PC-9 (cell line): ENCODE measurements at regions of chr2 and their contacts with region 1.

Region 1: DNA sequence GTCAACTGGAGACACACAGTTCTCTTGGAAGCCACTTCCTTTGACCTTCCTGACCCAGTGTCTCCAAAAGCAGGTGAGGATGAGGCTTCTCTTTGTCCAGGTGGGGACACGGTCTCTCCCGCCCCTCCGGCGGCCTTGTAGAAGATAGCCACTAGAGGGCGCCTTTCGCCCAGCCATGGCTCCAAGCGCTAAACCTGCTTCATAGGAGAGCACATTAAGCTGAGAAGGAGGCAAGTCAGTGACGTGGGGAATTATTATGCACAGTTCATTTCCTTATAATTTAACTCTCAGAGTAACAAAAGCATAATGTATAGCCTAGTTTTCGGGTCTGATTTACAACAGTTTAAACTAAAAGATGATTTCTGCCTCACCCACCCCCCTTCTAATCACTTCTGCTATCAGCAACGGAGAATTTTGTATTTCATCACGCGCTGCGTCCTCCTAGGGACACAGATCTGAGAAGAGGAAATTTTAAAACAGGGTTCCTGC is 208.7 kb downstream of the ICOS start:
- DNase-seq: peak; percentile 40 to 62
- H3K4me3 ChIP-seq: no peak overlapping the region
- H3K27ac ChIP-seq: no peak overlapping the region
- H3K4me1 ChIP-seq: no peaks in the 10 kb centered on the region
- H3K27me3 ChIP-seq: peaks cover 35% of the 10 kb centered on the region
- CTCF ChIP-seq: peak; percentile 84

Region 2: DNA sequence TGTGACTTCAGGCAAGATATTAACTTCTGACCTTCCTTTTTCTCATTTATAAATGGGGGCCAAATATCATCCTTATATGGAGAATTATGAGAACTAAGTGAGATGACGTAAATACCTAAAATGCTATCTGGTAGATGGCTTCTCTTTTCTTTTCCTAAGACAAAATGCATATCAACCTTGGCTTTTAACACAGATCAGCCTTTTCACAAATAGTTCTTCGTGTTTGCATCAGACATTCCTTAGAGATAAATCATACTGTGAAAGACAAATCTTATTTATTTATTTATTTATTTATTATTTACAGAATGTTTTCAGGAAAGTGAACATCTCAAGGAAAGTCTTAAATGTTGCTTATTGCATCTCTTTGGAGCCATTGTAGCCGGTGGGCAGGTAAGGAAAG is 1067.9 kb before region 1 on chr2:
- CTCF ChIA-PET with region 1: no interaction called
- POLR2A ChIA-PET with region 1: no interaction called
- intact Hi-C with region 1: no loop called
- DNase-seq: no peak
- H3K4me3 ChIP-seq: no peak overlapping the region
- H3K27ac ChIP-seq: peak overlapping the region; percentile 74
- H3K4me1 ChIP-seq: peaks cover 11% of the 10 kb centered on the region
- H3K27me3 ChIP-seq: no peaks in the 10 kb centered on the region
- CTCF ChIP-seq: no peak

Region 3: DNA sequence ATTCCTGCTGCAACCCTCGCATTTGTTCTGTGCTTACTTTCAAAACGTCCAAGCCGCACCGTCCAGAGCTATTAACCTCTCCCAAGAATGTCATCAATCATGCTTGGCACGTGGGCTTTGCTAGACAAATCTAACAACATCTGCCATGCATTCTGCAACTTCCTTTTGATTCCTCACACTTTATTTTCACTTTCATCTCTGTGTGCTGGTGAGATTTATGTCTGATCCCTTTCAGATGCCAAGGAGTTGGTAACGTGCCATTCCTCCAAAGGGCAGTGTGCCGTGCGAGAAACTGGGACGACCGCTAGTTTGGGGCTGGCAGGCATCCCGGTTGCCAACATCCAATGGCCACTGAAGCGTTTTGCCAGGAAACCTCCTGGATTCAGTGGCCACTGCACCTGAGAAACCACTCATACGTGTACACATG is 169.9 kb after region 1 on chr2:
- CTCF ChIA-PET with region 1: no interaction called
- POLR2A ChIA-PET with region 1: no interaction called
- intact Hi-C with region 1: loop called (anchors 10 kb)
- DNase-seq: no peak
- H3K4me3 ChIP-seq: no peak overlapping the region
- H3K27ac ChIP-seq: no peak overlapping the region
- H3K4me1 ChIP-seq: no peaks in the 10 kb centered on the region
- H3K27me3 ChIP-seq: no peaks in the 10 kb centered on the region
- CTCF ChIP-seq: no peak

Region 4: GRCh38 chr2:205925373-205926337 is 1780.3 kb after region 1 on chr2:
- CTCF ChIA-PET with region 1: no interaction called
- POLR2A ChIA-PET with region 1: no interaction called
- intact Hi-C with region 1: loop called (anchors 5 kb)
- DNase-seq: peak in 1 of 2 experiments; percentile 50
- H3K4me3 ChIP-seq: peak overlapping the region; percentile 43; the same call in 1 of the 2 replicates
- H3K27ac ChIP-seq: no peak overlapping the region
- H3K4me1 ChIP-seq: 0 out of 2 replicates have a peak, but pooled peaks cover 4% of the 10 kb centered on the region
- H3K27me3 ChIP-seq: peaks cover 12% of the 10 kb centered on the region
- CTCF ChIP-seq: peak; percentile 90

Region 5: DNA sequence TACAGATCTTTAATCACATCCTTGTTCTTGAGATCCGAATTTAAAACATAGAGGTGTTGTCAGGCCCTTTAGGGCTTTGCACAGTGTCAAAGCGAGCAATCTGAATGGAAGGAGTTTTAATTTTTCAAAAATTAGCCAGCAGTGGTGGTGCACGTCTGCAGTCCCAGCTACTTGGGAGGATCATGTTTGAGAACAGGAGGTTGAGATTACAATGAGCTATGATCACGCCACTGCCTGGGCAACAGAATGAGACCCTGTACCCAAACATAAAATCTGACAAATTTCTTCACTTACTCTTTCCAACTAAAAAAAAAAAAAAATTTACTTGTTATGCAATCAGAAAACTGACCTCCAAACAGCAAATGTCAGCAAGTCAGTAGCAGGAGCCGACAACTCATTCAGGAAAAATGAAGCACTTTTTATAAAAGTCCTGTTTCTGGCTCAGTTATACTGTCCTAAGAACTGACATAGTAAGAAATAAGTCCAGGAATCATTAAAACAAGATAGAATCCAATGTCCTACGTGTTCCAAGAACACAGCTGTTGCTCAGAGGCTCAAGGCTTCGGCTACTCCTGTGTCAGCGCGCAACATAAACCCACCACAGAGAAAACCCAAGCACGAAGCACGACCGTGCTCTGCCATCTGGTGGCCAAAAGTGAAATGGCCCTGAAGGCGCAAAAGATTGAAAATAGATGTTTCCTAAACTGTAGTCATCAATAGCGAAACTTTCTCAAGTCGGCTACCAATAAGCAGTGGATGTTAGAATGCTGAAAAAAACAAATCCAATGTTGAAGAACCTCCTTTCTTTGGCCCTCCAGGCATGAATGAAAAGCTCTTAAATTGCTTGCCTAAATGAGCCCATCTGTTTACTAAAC is 1802.6 kb after region 1 on chr2:
- CTCF ChIA-PET with region 1: no interaction called
- POLR2A ChIA-PET with region 1: no interaction called
- intact Hi-C with region 1: loop called (anchors 5 kb)
- DNase-seq: peak in 1 of 2 experiments; percentile 41
- H3K4me3 ChIP-seq: peak overlapping the region; percentile 14; the same call in 1 of the 2 replicates
- H3K27ac ChIP-seq: no peak overlapping the region
- H3K4me1 ChIP-seq: no peaks in the 10 kb centered on the region
- H3K27me3 ChIP-seq: no peaks in the 10 kb centered on the region
- CTCF ChIP-seq: peak; percentile 87